ENCODE measurements at regions of chr9 and their contacts with region 1.

Region 1: GRCh38 chr9:123305879-123306278 is 37.5 kb upstream of the STRBP start:
- DNase-seq: peak in 1 of 4 experiments; percentile 8
- ATAC-seq: no peak
- H3K4me3 ChIP-seq: no peak overlapping the region
- H3K27ac ChIP-seq: peak overlapping the region; percentile 86
- H3K4me1 ChIP-seq: peaks cover 57 to 66% of the 10 kb centered on the region in 2 experiments
- H3K27me3 ChIP-seq: no peaks in the 10 kb centered on the region
- CTCF ChIP-seq: no peak
- EP300 ChIP-seq: no peak
- POLR2A ChIP-seq: no peak
- RAD21 ChIP-seq: no peak

Region 2: GRCh38 chr9:123246534-123246933 is 59.3 kb before region 1 on chr9:
- CTCF ChIA-PET with region 1: no interaction called
- POLR2A ChIA-PET with region 1: no interaction called
- in situ Hi-C with region 1: no loop called
- intact Hi-C with region 1: no loop called
- DNase-seq: no peak
- ATAC-seq: no peak
- H3K4me3 ChIP-seq: no peak overlapping the region
- H3K27ac ChIP-seq: no peak overlapping the region
- H3K4me1 ChIP-seq: peaks cover 0 to 5% of the 10 kb centered on the region in 2 experiments; a peak in 2 of 5 replicates
- H3K27me3 ChIP-seq: no peaks in the 10 kb centered on the region
- CTCF ChIP-seq: no peak
- EP300 ChIP-seq: no peak
- POLR2A ChIP-seq: no peak
- RAD21 ChIP-seq: no peak

Region 3: DNA sequence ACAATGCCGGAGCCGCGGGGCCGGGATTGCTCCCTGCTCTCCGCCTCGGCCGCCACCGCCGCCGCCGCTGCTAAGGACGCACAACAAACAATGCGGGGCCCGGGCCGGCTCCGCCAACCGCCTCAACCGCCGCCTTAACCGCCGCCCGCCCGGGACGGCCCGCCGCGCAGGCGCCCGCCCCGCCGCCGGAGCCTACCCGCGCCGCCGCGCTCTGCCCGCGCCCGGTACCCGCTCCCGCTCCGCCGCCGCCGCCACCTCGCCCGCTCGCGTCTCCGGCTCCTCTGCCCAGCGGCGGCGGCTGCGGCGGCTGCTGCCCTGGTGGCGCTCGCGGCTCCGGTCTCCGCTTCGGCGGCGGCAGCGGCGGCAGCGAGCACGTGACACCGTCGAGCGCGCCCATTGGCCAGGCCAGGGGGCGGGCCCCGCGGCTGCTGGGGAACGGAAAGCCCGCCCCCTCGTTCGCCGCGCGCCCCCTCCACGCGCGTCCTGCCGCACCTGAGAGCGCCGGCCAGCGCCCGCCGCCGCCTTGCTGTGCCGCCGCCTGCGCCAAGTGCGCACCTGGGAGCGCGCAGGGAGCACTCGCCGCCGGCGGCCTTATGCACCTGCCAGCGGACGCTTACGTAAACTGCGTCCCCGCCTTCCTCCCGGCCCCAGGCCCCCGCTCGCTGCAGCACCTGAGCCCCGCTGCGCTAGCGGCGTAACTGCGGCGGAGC is 37.5 kb before region 1 on chr9 and contains the start of gene STRBP:
- CTCF ChIA-PET with region 1: no interaction called
- POLR2A ChIA-PET with region 1: interaction called, 9 read pairs
- in situ Hi-C with region 1: no loop called
- intact Hi-C with region 1: loop called (anchors 1 kb)
- DNase-seq: peak; percentile 92 to 99 (median 98)
- ATAC-seq: peak; percentile 92
- H3K4me3 ChIP-seq: peak within 1 kb of the TSS; percentile 85
- H3K27ac ChIP-seq: peak within 1 kb of the TSS; percentile 79
- H3K4me1 ChIP-seq: peaks cover 24% of the 10 kb centered on the region in 2 experiments; a peak in 4 of 5 replicates
- H3K27me3 ChIP-seq: no peaks in the 10 kb centered on the region
- CTCF ChIP-seq: peak in 1 of 3 experiments; percentile 4; a peak in 1 of 6 replicates
- EP300 ChIP-seq: no peak
- POLR2A ChIP-seq: no peak
- RAD21 ChIP-seq: peak in 1 of 2 experiments; percentile 17; a peak in 1 of 4 replicates
- polyA plus RNA-seq, gene STRBP: 27.7 to 27.8 TPM

Region 4: DNA sequence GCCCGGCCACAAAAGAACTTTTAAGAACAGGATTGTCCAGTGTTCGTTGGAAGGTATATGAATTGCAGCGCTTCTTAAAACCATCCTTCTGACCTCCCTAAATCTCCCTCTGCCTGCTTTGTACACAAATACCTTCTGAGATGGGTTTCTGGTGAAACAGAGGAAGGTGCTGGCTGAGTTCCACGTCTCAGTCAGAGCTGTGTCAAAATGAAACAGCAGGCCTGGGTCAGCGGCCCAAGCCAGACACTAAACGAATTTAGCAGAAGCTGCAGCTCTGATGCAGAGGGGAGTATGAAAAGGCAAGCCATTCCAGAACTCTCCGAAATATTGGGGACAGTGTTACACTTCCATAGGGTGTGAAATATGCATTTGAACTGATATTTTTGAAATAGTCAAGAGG is 12.3 kb after region 1 on chr9:
- CTCF ChIA-PET with region 1: no interaction called
- POLR2A ChIA-PET with region 1: interaction called, 11 read pairs
- in situ Hi-C with region 1: no loop called
- intact Hi-C with region 1: no loop called
- DNase-seq: no peak
- ATAC-seq: no peak; the same call in 2 of the 3 replicates
- H3K4me3 ChIP-seq: no peak overlapping the region
- H3K27ac ChIP-seq: no peak overlapping the region
- H3K4me1 ChIP-seq: peaks cover 14 to 15% of the 10 kb centered on the region in 2 experiments; a peak in 4 of 5 replicates
- H3K27me3 ChIP-seq: no peaks in the 10 kb centered on the region
- CTCF ChIP-seq: no peak
- EP300 ChIP-seq: no peak
- POLR2A ChIP-seq: no peak
- RAD21 ChIP-seq: no peak

Measured in K562 (cell line).